Ovary (tissue), 10 donors: ENCODE measurements at regions of chr19 and their contacts with region 1.

Region 1: GRCh38 chr19:13051267-13052165 is 51.1 kb downstream of the LYL1 start:
- DNase-seq: peak; percentile 74 to 82 (median 76)
- H3K4me3 ChIP-seq: peak overlapping the region; percentile 23
- H3K27ac ChIP-seq: peak overlapping the region in 1 of 2 donors; percentile 95
- H3K4me1 ChIP-seq: peaks cover 53% of the 10 kb centered on the region
- H3K27me3 ChIP-seq: no peaks in the 10 kb centered on the region
- CTCF ChIP-seq: no peak
- EP300 ChIP-seq: no peak
- POLR2A ChIP-seq: no peak

Region 2: GRCh38 chr19:12946092-12946721 is 105.3 kb before region 1 on chr19:
- intact Hi-C with region 1: no loop called
- DNase-seq: peak; percentile 53 to 79 (median 67)
- H3K4me3 ChIP-seq: peak overlapping the region; percentile 96
- H3K27ac ChIP-seq: peak overlapping the region; percentile 83 to 85
- H3K4me1 ChIP-seq: no peaks in the 10 kb centered on the region
- H3K27me3 ChIP-seq: no peaks in the 10 kb centered on the region
- CTCF ChIP-seq: no peak
- EP300 ChIP-seq: no peak
- POLR2A ChIP-seq: no peak

Region 3: GRCh38 chr19:13002166-13002898 is 49.2 kb before region 1 on chr19:
- intact Hi-C with region 1: loop called in 1 of 4 experiments (anchors 10 kb)
- DNase-seq: peak; percentile 86 to 92 (median 89)
- H3K4me3 ChIP-seq: peak overlapping the region; percentile 40
- H3K27ac ChIP-seq: peak overlapping the region; percentile 72 to 83
- H3K4me1 ChIP-seq: peaks cover 33% of the 10 kb centered on the region
- H3K27me3 ChIP-seq: no peaks in the 10 kb centered on the region
- CTCF ChIP-seq: no peak
- EP300 ChIP-seq: no peak
- POLR2A ChIP-seq: no peak

Region 4: GRCh38 chr19:13022859-13023636 is 28.5 kb before region 1 on chr19:
- intact Hi-C with region 1: loop called in 2 of 4 experiments (anchors 5 kb)
- DNase-seq: peak; percentile 90 to 94 (median 93)
- H3K4me3 ChIP-seq: peak overlapping the region; percentile 32
- H3K27ac ChIP-seq: peak overlapping the region; percentile 85 to 89
- H3K4me1 ChIP-seq: peaks cover 40% of the 10 kb centered on the region
- H3K27me3 ChIP-seq: no peaks in the 10 kb centered on the region
- CTCF ChIP-seq: peak in 1 of 3 donors; percentile 37
- EP300 ChIP-seq: peak; percentile 38
- POLR2A ChIP-seq: peak; percentile 33